Activated T-helper 2 cell treated with anti-CD3 and anti-CD28 coated beads, Interferon-gamma antibody, Interleukin-2, Interleukin-4, amounts not matched to agents 10 μg/mL and 5 μg/mL and 100 μg/mL, durations not matched to agents 14 hours and 24 hours and 36 hours (primary cell): ENCODE measurements at regions of chr1 and their contacts with region 1.

Region 1: GRCh38 chr1:91924146-91924545 is 25.1 kb upstream of the BRDT start:
- DNase-seq: no peak
- H3K4me3 Mint-ChIP-seq: no peak overlapping the region
- H3K27ac Mint-ChIP-seq: no peak overlapping the region
- H3K4me1 Mint-ChIP-seq: peaks cover 10% of the 10 kb centered on the region
- H3K27me3 Mint-ChIP-seq: no peaks in the 10 kb centered on the region

Region 2: DNA sequence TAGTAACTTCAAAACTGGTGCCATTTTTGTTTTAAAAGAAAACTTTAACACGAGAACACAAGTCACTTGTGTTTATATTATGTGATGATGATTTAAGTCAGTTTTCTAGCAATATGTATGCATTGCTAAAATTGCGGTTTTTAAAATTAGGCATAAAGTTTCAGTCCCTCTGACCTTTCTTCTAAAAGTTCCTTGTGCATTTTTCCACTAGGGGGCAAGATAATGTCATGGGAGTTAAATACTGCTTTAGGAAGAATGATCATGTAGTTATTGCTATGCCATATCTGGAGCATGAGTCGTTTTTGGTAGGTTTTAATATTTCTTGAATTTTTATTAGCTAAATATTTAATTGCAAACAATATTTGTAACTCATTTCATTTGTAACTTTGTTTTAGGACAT is 412.8 kb before region 1 on chr1:
- intact Hi-C with region 1: loop called (anchors 1 kb)
- DNase-seq: no peak
- H3K4me3 Mint-ChIP-seq: no peak overlapping the region
- H3K27ac Mint-ChIP-seq: no peak overlapping the region
- H3K4me1 Mint-ChIP-seq: peaks cover 25% of the 10 kb centered on the region
- H3K27me3 Mint-ChIP-seq: no peaks in the 10 kb centered on the region

Region 3: DNA sequence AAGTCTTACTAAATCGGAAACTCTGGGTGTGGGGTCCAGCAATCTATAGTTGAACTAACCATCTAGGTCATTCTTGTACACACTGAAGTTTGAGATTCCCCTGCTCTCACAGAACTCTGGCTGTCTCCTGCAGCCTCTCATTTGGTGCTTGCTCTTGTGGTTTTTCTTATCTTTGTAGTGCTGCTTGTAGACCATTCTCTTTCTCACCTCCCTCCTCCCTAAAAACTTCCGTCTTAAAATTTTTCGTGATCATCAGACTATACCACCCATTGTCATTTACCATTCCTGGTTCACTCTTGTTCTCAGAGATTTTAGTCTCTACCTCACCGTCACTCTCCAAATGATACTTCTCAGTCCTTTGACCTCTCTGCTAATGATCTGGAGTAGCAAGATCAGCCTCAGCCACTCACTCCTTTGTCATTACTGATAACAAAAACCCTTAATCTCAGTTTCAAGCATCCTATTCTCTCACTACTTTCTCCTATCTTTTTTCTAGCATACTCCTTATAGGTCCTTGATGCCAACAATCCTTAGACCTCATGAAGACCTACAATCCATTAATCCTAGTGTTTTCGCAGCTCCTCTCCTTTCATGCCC is 92.7 kb after region 1 on chr1:
- intact Hi-C with region 1: no loop called
- DNase-seq: no peak
- H3K4me3 Mint-ChIP-seq: no peak overlapping the region
- H3K27ac Mint-ChIP-seq: peak overlapping the region; percentile 0
- H3K4me1 Mint-ChIP-seq: peaks cover 14% of the 10 kb centered on the region
- H3K27me3 Mint-ChIP-seq: peaks cover 17% of the 10 kb centered on the region